ENCODE measurements at regions of chr18 and their contacts with region 1.

Region 1: GRCh38 chr18:79546781-79547272 is 132.8 kb upstream of the CTDP1 start:
- DNase-seq: no peak
- H3K4me3 ChIP-seq: no peak overlapping the region
- H3K27ac ChIP-seq: no peak overlapping the region
- H3K4me1 ChIP-seq: no peaks in the 10 kb centered on the region
- H3K27me3 ChIP-seq: peaks cover 8% of the 10 kb centered on the region
- CTCF ChIP-seq: no peak
- EP300 ChIP-seq: no peak
- POLR2A ChIP-seq: no peak

Region 2: DNA sequence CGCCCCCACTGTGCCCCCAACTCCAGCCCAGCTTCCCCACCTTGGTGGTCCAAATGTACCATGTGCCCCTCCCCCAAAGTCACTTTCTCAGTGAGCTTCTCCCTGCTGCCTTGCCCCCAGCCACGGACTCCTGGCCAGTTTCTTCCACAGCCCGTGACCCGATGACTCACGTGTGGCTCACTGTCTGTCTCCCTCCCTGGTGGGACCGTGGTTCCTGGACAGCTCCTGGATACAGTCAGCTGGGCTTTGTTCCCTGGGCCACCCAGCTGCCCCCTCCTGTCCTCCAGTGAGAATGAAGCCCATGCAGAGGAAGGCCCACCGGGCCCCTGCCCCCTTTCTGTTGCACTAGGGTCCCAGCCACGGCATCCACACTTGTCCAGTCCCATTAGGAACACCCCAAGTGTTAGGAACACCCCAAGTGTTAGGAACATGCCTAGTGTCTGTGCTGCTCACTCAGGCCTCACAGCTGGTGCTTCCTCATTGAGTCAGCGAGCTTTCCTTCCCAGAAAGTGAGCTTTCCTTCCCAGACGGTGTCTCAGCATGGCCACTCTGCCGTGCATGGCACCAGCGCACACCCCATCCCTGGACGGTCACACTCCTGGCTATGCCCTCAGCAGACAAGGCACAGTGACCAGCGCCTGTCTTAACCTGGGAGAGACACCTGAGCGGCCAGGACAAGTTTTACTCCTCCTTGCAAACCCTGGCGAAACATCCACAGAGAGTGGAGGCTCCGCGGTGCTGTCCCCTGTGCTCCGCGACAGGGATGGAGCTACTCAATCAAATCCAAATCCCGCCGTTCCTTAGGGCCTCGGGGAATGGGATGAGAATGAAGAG is 88.0 kb after region 1 on chr18:
- in situ Hi-C with region 1: no loop called
- intact Hi-C with region 1: loop called (anchors 1 kb)
- DNase-seq: no peak
- H3K4me3 ChIP-seq: no peak overlapping the region
- H3K27ac ChIP-seq: no peak overlapping the region
- H3K4me1 ChIP-seq: peaks cover 0 to 4% (median 0%) of the 10 kb centered on the region in 4 donors
- H3K27me3 ChIP-seq: peaks cover 18% of the 10 kb centered on the region
- CTCF ChIP-seq: no peak
- EP300 ChIP-seq: no peak
- POLR2A ChIP-seq: no peak